Ascending aorta (tissue), 2 donors: ENCODE measurements at regions of chr5 and their contacts with region 1.

Region 1: GRCh38 chr5:132777209-132778069 is at the start of gene SEPTIN8:
- DNase-seq: no peak
- H3K4me3 ChIP-seq: peak within 1 kb of the TSS; percentile 66 to 86
- H3K27ac ChIP-seq: peak within 1 kb of the TSS; percentile 87 to 96
- H3K4me1 ChIP-seq: peaks cover 8 to 29% of the 10 kb centered on the region in 2 donors
- H3K27me3 ChIP-seq: no peaks in the 10 kb centered on the region
- CTCF ChIP-seq: no peak
- total RNA-seq, gene SEPTIN8: 113 TPM

Region 2: DNA sequence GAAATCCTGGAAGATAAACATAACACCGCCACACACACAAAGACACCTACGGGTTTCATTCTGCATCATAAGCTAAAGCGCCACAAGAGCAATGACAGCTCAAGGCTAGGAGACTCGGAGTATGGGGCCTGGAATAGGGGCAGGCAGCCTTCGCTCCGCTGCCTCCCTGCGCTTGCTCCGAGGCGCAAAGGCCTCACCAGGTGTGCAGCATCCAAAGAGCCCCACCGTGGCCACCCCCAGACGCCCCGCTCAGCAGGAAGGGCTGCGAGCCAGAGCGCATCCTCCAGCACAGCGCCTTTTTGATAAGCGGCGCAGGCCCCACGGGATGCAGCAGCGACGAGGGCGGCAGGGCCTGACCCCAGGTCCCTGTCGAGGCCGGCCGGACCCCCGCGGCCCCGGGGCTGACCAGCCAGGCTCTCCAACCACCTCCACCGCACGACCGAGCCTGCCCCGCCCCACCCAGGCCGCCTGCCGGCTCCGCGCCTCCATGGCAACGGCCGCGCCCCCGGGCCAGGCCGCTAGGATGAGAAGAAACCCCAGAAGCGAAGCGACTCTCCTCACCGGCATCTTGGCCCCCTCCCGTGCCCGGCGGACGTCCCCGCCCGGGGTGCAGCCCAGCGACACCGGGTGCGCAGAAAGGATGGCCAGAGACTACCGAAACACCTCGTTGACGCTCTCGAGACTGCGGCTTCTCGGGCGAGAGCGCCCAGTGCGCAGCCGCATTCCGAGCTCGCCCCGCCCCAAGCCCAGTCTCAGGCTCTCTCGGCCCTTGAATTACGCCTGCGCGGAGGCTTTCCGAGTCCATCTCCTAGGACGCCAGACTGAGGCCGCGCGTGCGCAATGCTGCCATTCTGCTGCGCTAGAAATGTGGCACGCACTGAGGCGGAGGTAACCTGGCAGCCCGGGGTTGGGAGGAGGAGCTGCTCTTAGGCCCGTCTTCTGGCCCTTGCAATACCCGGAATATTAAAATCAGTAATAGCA is 40.3 kb before region 1 on chr5 and contains the start of gene KIF3A:
- intact Hi-C with region 1: loop called (anchors 5 kb)
- DNase-seq: peak; percentile 82 to 98
- H3K4me3 ChIP-seq: peak within 1 kb of the TSS; percentile 70 to 90
- H3K27ac ChIP-seq: peak within 1 kb of the TSS in 1 of 2 donors; percentile 70
- H3K4me1 ChIP-seq: peaks cover 0 to 4% of the 10 kb centered on the region in 2 donors
- H3K27me3 ChIP-seq: no peaks in the 10 kb centered on the region
- CTCF ChIP-seq: peak in 2 of 3 experiments; percentile 19 to 54
- total RNA-seq, gene KIF3A: 4.4 TPM

Region 3: DNA sequence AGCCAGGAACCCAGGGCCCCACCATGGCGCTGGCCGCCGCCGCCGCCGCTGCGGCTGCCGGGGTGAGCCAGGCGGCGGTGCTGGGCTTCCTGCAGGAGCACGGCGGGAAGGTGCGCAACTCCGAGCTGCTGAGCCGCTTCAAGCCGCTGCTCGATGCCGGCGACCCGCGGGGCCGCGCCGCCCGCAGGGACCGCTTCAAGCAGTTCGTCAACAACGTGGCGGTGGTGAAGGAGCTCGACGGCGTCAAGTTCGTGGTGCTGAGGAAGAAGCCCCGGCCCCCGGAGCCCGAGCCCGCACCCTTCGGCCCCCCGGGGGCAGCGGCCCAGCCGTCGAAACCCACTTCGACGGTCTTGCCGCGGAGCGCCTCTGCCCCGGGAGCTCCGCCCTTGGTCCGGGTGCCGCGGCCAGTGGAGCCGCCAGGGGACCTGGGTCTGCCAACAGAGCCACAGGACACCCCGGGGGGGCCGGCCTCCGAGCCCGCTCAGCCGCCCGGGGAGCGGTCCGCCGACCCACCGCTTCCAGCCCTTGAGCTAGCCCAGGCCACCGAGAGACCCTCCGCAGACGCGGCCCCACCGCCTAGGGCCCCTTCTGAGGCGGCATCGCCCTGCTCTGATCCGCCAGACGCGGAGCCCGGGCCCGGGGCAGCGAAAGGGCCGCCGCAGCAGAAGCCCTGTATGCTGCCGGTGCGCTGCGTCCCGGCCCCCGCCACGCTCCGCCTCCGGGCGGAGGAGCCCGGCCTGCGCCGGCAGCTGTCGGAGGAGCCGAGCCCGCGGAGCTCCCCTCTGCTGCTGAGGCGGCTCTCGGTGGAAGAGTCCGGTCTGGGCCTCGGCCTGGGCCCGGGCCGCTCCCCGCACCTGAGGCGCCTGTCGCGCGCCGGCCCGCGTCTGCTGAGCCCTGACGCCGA is 36.4 kb after region 1 on chr5:
- intact Hi-C with region 1: loop called (anchors 5 kb)
- DNase-seq: peak in 1 of 2 donors; percentile 63
- H3K4me3 ChIP-seq: peak overlapping the region; percentile 53 to 62
- H3K27ac ChIP-seq: peak overlapping the region in 1 of 2 donors; percentile 28
- H3K4me1 ChIP-seq: peaks cover 7 to 8% of the 10 kb centered on the region in 2 donors
- H3K27me3 ChIP-seq: peaks cover 5% of the 10 kb centered on the region
- CTCF ChIP-seq: no peak

Region 4: GRCh38 chr5:132820162-132820754 is 42.8 kb after region 1 on chr5:
- intact Hi-C with region 1: loop called (anchors 2 kb)
- DNase-seq: peak; percentile 46 to 96
- H3K4me3 ChIP-seq: no peak overlapping the region
- H3K27ac ChIP-seq: no peak overlapping the region
- H3K4me1 ChIP-seq: peaks cover 5 to 8% of the 10 kb centered on the region in 2 donors
- H3K27me3 ChIP-seq: no peaks in the 10 kb centered on the region
- CTCF ChIP-seq: peak; percentile 88 to 93 (median 93)

Region 5: GRCh38 chr5:132947671-132948070 is 170.2 kb after region 1 on chr5:
- intact Hi-C with region 1: no loop called
- DNase-seq: no peak
- H3K4me3 ChIP-seq: no peak overlapping the region
- H3K27ac ChIP-seq: no peak overlapping the region
- H3K4me1 ChIP-seq: peaks cover 9 to 12% of the 10 kb centered on the region in 2 donors
- H3K27me3 ChIP-seq: no peaks in the 10 kb centered on the region
- CTCF ChIP-seq: no peak

Region 6: GRCh38 chr5:132963175-132964104 is 186.0 kb after region 1 on chr5 and contains the start of gene AFF4:
- intact Hi-C with region 1: loop called (anchors 2 kb)
- DNase-seq: peak; percentile 82 to 98
- H3K4me3 ChIP-seq: peak within 1 kb of the TSS; percentile 97 to 98
- H3K27ac ChIP-seq: peak within 1 kb of the TSS; percentile 100
- H3K4me1 ChIP-seq: peaks cover 3 to 20% of the 10 kb centered on the region in 2 donors
- H3K27me3 ChIP-seq: no peaks in the 10 kb centered on the region
- CTCF ChIP-seq: peak in 1 of 3 experiments; percentile 2
- total RNA-seq, gene AFF4: 63.0 TPM

Region 7: DNA sequence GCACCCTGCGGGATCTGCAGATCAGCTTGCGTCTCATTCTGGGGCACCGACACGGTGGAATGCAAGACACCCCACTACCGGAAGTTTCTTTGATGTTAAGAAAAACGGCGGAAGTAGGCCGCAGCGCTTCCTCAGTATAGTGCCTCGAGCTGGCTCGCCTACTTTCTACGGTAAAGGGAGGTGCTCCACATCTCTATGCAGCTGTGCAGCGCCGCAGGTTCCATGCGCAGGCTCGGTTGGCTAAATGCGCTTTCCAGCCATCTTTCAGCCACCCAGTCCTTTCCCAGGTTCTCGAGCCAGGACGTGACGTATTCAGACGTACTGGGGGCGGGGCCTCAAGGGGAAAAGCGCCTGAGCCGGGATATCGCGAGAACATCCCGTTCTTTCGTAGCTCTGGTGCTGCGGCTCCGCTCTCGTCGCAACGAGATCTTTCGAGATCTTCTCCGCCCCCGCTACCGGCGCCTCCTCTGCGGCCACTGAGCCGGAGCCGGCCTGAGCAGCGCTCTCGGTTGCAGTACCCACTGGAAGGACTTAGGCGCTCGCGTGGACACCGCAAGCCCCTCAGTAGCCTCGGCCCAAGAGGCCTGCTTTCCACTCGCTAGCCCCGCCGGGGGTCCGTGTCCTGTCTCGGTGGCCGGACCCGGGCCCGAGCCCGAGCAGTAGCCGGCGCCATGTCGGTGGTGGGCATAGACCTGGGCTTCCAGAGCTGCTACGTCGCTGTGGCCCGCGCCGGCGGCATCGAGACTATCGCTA is 274.3 kb after region 1 on chr5 and contains the start of gene HSPA4:
- intact Hi-C with region 1: loop called (anchors 5 kb)
- DNase-seq: peak; percentile 88 to 99
- H3K4me3 ChIP-seq: peak within 1 kb of the TSS; percentile 92 to 95
- H3K27ac ChIP-seq: peak within 1 kb of the TSS; percentile 96 to 98
- H3K4me1 ChIP-seq: peaks cover 0 to 46% of the 10 kb centered on the region in 2 donors
- H3K27me3 ChIP-seq: no peaks in the 10 kb centered on the region
- CTCF ChIP-seq: no peak
- total RNA-seq, gene HSPA4: 16.2 TPM